ENCODE measurements at regions of chr10 and their contacts with region 1.

Region 1: GRCh38 chr10:119079632-119080520 is 741 bp downstream of the EIF3A start:
- DNase-seq: peak; percentile 38
- H3K4me3 ChIP-seq: peak overlapping the region; percentile 56 to 89 (median 84)
- H3K27ac ChIP-seq: peak overlapping the region; percentile 89 to 99 (median 96)
- H3K4me1 ChIP-seq: peaks cover 10 to 55% (median 31%) of the 10 kb centered on the region in 3 donors
- H3K27me3 ChIP-seq: no peaks in the 10 kb centered on the region
- CTCF ChIP-seq: no peak
- POLR2A ChIP-seq: peak in 2 of 4 donors; percentile 7 to 19

Region 2: GRCh38 chr10:119030421-119031250 is 49.2 kb before region 1 on chr10:
- intact Hi-C with region 1: loop called (anchors 5 kb)
- DNase-seq: no peak
- H3K4me3 ChIP-seq: peak overlapping the region; percentile 49 to 80 (median 64)
- H3K27ac ChIP-seq: peak overlapping the region in 2 of 4 donors; percentile 53 to 82
- H3K4me1 ChIP-seq: peaks cover 18 to 44% (median 20%) of the 10 kb centered on the region in 3 donors
- H3K27me3 ChIP-seq: no peaks in the 10 kb centered on the region
- CTCF ChIP-seq: peak in 1 of 6 experiments; percentile 9
- POLR2A ChIP-seq: no peak

Measured in esophagus squamous epithelium (tissue), 5 donors.